ENCODE measurements at regions of chr17 and their contacts with region 1.

Region 1: GRCh38 chr17:78766743-78767294 is 15.3 kb downstream of the CYTH1 start:
- DNase-seq: no peak
- H3K4me3 ChIP-seq: no peak overlapping the region
- H3K27ac ChIP-seq: no peak overlapping the region
- H3K4me1 ChIP-seq: peaks cover 29% of the 10 kb centered on the region
- H3K27me3 ChIP-seq: no peaks in the 10 kb centered on the region
- CTCF ChIP-seq: no peak
- POLR2A ChIP-seq: no peak

Region 2: DNA sequence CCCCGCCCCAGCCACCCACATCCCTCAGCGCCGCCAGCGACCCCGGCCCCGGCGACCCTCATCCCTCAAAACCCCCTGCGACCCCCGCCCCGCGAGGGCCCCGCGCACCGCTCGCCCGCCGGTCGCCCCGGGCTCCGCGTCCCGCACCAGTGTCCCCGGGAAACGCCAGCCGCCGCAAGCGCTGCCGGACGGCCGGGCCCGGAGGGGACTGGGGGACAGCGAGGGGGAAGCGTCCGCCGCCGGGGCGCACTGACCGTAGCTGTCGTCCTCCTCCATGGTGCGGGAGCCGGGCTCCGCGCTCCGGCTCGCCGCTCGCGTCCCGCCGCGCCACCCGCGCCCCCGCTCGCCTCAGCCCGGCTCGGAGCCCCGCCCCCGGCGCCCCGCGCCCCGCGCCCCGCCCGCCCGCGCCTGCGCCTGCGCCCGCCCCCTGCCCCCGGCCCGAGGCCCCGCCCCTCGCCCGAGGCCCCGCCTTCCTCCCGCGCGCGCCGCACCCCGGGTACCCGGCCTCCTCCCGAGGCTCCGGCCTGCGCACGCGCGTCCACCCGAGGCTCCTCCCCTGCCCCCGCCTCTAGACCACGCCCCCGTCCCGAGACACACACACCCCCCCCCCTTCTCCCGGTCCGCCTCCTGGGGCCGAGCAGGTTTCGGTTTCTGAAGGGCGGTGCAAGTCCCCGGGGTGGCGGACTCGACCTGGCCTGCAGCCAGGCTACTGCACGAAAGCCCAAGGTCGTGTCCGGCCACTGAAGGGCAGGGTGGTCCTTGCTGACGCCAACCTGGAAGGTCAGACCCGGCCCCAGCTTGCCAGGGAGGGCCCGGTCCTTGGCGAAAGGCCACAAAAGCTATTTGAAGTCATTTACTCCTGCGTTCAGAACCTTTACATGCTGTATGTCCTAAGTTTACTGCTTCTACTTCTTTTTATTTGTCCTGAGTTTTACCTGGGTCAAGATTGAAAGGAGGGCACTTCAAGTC is 15.4 kb after region 1 on chr17 and contains the start of gene CYTH1:
- CTCF ChIA-PET with region 1: interaction called, 3 read pairs
- POLR2A ChIA-PET with region 1: interaction called, 6 read pairs
- dilution Hi-C with region 1: no loop called
- intact Hi-C with region 1: loop called (anchors 2 kb)
- DNase-seq: peak; percentile 93
- H3K4me3 ChIP-seq: peak within 1 kb of the TSS; percentile 84 to 94 (median 84)
- H3K27ac ChIP-seq: peak within 1 kb of the TSS; percentile 51
- H3K4me1 ChIP-seq: peaks cover 4% of the 10 kb centered on the region
- H3K27me3 ChIP-seq: no peaks in the 10 kb centered on the region
- CTCF ChIP-seq: no peak
- POLR2A ChIP-seq: peak; percentile 41
- total RNA-seq, gene CYTH1: 49.9 and 54.2 TPM in 2 replicates